ENCODE measurements at regions of chr1 and their contacts with region 1.

Region 1: GRCh38 chr1:112390775-112391602 is 5.0 kb upstream of the CTTNBP2NL start:
- DNase-seq: peak; percentile 91
- H3K4me3 ChIP-seq: peak overlapping the region; percentile 6 to 58 (median 29)
- H3K27ac ChIP-seq: peak overlapping the region; percentile 100
- H3K4me1 ChIP-seq: peaks cover 75% of the 10 kb centered on the region
- H3K27me3 ChIP-seq: no peaks in the 10 kb centered on the region
- CTCF ChIP-seq: peak; percentile 87 to 97
- POLR2A ChIP-seq: peak; percentile 69

Region 2: GRCh38 chr1:112325504-112325903 is 65.5 kb before region 1 on chr1:
- CTCF ChIA-PET with region 1: no interaction called
- POLR2A ChIA-PET with region 1: no interaction called
- dilution Hi-C with region 1: no loop called
- intact Hi-C with region 1: no loop called
- DNase-seq: no peak
- H3K4me3 ChIP-seq: no peak overlapping the region
- H3K27ac ChIP-seq: no peak overlapping the region
- H3K4me1 ChIP-seq: peaks cover 8% of the 10 kb centered on the region
- H3K27me3 ChIP-seq: peaks cover 2 to 10% of the 10 kb centered on the region in 2 experiments
- CTCF ChIP-seq: no peak
- POLR2A ChIP-seq: no peak

Region 3: GRCh38 chr1:112358798-112359408 is 32.1 kb before region 1 on chr1:
- CTCF ChIA-PET with region 1: interaction called, 6 read pairs
- POLR2A ChIA-PET with region 1: no interaction called
- dilution Hi-C with region 1: no loop called
- intact Hi-C with region 1: loop called (anchors 1 kb)
- DNase-seq: peak; percentile 65
- H3K4me3 ChIP-seq: no peak overlapping the region
- H3K27ac ChIP-seq: no peak overlapping the region
- H3K4me1 ChIP-seq: no peaks in the 10 kb centered on the region
- H3K27me3 ChIP-seq: peaks cover 14 to 30% of the 10 kb centered on the region in 2 experiments
- CTCF ChIP-seq: peak; percentile 79 to 88
- POLR2A ChIP-seq: no peak

Region 4: GRCh38 chr1:112466078-112466660 is 75.2 kb after region 1 on chr1:
- CTCF ChIA-PET with region 1: interaction called, 89 read pairs
- POLR2A ChIA-PET with region 1: interaction called, 4 read pairs
- dilution Hi-C with region 1: no loop called
- intact Hi-C with region 1: loop called (anchors 1 kb)
- DNase-seq: peak; percentile 97
- H3K4me3 ChIP-seq: peak overlapping the region in 1 of 3 experiments; percentile 5
- H3K27ac ChIP-seq: peak overlapping the region; percentile 59
- H3K4me1 ChIP-seq: peaks cover 28% of the 10 kb centered on the region
- H3K27me3 ChIP-seq: no peaks in the 10 kb centered on the region
- CTCF ChIP-seq: peak; percentile 82 to 85
- POLR2A ChIP-seq: peak; percentile 71

Region 5: GRCh38 chr1:112614460-112615065 is 223.6 kb after region 1 on chr1:
- CTCF ChIA-PET with region 1: interaction called, 20 read pairs
- POLR2A ChIA-PET with region 1: interaction called, 4 read pairs
- dilution Hi-C with region 1: no loop called
- intact Hi-C with region 1: loop called (anchors 1 kb)
- DNase-seq: peak; percentile 64
- H3K4me3 ChIP-seq: no peak overlapping the region
- H3K27ac ChIP-seq: no peak overlapping the region
- H3K4me1 ChIP-seq: peaks cover 14% of the 10 kb centered on the region
- H3K27me3 ChIP-seq: no peaks in the 10 kb centered on the region
- CTCF ChIP-seq: peak; percentile 40 to 49
- POLR2A ChIP-seq: no peak

Region 6: GRCh38 chr1:112744009-112744578 is 353.1 kb after region 1 on chr1:
- CTCF ChIA-PET with region 1: no interaction called
- POLR2A ChIA-PET with region 1: no interaction called
- dilution Hi-C with region 1: no loop called
- intact Hi-C with region 1: no loop called
- DNase-seq: peak; percentile 25
- H3K4me3 ChIP-seq: peak overlapping the region; percentile 3 to 25 (median 6)
- H3K27ac ChIP-seq: no peak overlapping the region
- H3K4me1 ChIP-seq: peaks cover 7% of the 10 kb centered on the region
- H3K27me3 ChIP-seq: peaks cover 29 to 36% of the 10 kb centered on the region in 2 experiments
- CTCF ChIP-seq: peak in 1 of 2 donors; percentile 28
- POLR2A ChIP-seq: no peak

Region 7: DNA sequence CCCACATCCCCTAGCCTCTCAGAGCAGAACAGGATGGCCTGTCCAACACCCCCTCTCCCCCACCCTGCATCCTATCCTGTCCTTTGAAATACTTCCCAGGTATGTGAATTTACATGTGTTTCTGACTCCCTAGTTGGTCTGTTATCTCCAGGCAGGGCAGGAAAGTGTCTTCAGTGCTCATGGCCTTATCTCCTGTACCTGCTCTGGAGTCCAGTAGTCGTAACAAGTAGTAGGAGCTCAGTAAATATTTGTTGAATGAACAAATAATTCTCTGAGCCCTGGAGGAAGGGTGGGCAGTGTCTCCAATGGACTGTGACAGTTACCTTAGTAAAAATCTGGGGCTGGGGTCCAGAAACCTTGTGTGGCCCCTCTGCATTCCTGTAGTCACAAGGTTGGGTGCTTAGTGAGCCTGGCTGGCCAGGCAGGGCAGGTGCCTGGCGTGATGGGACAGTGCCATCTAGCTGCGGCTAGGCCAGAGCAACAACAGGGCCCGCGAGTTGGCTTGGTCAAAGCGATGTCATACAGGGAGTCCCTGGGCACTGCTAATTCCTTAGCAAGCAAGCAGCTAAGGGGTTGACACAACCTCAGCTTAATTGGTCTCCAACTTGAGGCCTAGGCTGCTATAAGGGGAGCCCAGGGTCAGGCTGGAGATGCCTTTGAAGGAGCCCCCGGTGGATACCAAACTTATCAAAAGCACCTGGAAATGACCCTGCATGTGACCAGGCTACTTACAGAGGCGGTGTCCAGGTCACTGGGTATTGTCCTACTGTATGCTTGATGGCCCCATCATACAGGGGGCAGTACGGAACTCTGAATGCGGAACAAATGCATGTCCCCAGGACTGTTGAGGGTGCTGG is 413.1 kb after region 1 on chr1:
- CTCF ChIA-PET with region 1: no interaction called
- POLR2A ChIA-PET with region 1: no interaction called
- dilution Hi-C with region 1: no loop called
- intact Hi-C with region 1: loop called (anchors 1 kb)
- DNase-seq: peak; percentile 69
- H3K4me3 ChIP-seq: no peak overlapping the region
- H3K27ac ChIP-seq: no peak overlapping the region
- H3K4me1 ChIP-seq: no peaks in the 10 kb centered on the region
- H3K27me3 ChIP-seq: no peaks in the 10 kb centered on the region
- CTCF ChIP-seq: peak; percentile 77 to 91
- POLR2A ChIP-seq: no peak

Region 8: DNA sequence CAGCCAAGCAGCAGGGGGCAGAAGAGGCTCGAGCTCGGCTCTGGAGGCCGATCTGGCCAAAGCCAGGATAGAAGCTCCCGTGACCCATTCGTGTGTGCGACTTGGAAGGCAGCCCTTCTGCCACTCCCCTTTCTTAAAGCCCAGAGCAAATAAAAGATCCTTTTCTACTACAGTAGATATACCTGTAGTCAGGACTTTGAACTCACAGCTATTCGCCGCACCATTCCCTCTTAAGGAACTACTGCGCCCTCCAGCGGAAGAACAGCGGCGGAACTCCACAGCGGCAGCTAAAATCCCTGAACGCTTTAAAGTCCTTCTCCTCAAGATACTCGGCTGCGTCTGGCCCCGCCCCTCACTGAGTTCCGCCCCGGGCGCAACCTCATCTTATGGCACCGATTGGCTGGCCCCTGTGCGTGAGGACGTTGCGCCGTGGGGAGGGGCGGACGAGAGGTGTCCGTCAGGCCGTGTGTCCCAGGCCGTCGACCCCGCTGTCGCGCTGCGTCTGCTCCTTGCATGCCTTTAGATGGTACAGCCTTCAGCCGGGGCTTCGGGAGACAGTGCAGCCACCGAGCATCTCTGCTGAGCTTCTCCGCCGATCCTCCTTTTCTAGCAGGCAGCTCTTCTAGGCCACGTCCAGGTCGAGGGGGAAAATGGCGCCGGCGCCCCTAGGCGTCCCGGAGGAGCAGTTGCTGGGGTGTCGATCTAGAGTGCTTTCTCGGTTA is 681.9 kb after region 1 on chr1 and contains the start of gene LRIG2:
- CTCF ChIA-PET with region 1: no interaction called
- POLR2A ChIA-PET with region 1: no interaction called
- dilution Hi-C with region 1: no loop called
- intact Hi-C with region 1: loop called (anchors 5 kb)
- DNase-seq: peak; percentile 98
- H3K4me3 ChIP-seq: peak within 1 kb of the TSS; percentile 59 to 96 (median 69)
- H3K27ac ChIP-seq: peak within 1 kb of the TSS; percentile 71
- H3K4me1 ChIP-seq: peaks cover 11% of the 10 kb centered on the region
- H3K27me3 ChIP-seq: no peaks in the 10 kb centered on the region
- CTCF ChIP-seq: peak; percentile 73 to 86
- POLR2A ChIP-seq: peak; percentile 96
- total RNA-seq, gene LRIG2: 14.4 and 20.1 TPM in 2 replicates